Panc1 (cell line): ENCODE measurements at regions of chr3 and their contacts with region 1.

Region 1: DNA sequence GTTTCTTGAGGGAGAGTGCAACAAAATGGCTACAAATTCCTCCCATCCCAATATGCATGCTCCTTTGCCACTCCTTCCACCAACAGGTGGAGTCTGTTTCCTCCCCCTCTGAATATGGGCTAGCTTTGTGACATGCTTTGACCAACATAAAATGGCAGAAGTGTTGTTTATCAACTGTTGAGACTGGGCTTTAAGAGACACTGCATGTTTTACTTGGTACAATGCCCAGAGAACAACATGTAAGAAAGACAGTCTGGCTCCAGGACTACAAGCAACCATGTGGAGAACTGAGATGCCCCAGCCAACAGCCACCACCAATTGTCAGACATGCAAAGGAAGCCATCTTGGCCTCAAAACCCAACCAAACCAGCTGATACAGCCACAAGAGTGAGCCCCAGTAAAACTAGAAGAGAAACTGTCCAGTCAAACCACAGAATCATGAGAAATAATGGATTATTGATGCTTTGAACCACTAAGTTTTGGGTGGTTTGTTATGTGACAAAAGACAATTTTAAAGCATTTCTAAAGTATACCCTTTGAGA is 40.5 kb downstream of the NUDT16 start:
- DNase-seq: no peak
- ATAC-seq: no peak
- H3K4me3 ChIP-seq: no peak overlapping the region
- H3K27ac ChIP-seq: no peak overlapping the region
- H3K4me1 ChIP-seq: no peaks in the 10 kb centered on the region
- H3K27me3 ChIP-seq: peaks cover 4% of the 10 kb centered on the region
- CTCF ChIP-seq: no peak

Region 2: GRCh38 chr3:131107637-131108433 is 314.2 kb before region 1 on chr3:
- CTCF ChIA-PET with region 1: no interaction called
- POLR2A ChIA-PET with region 1: no interaction called
- in situ Hi-C with region 1: no loop called
- intact Hi-C with region 1: no loop called
- DNase-seq: peak; percentile 48
- ATAC-seq: peak; percentile 82
- H3K4me3 ChIP-seq: no peak overlapping the region
- H3K27ac ChIP-seq: peak overlapping the region; percentile 40; the same call in 1 of the 2 replicates
- H3K4me1 ChIP-seq: peaks cover 6% of the 10 kb centered on the region; the same call in 1 of the 2 replicates
- H3K27me3 ChIP-seq: no peaks in the 10 kb centered on the region
- CTCF ChIP-seq: no peak

Region 3: GRCh38 chr3:131458653-131459052 is 36.6 kb after region 1 on chr3:
- CTCF ChIA-PET with region 1: no interaction called
- POLR2A ChIA-PET with region 1: no interaction called
- in situ Hi-C with region 1: no loop called
- intact Hi-C with region 1: no loop called
- DNase-seq: no peak
- ATAC-seq: no peak
- H3K4me3 ChIP-seq: no peak overlapping the region
- H3K27ac ChIP-seq: no peak overlapping the region
- H3K4me1 ChIP-seq: no peaks in the 10 kb centered on the region
- H3K27me3 ChIP-seq: no peaks in the 10 kb centered on the region
- CTCF ChIP-seq: no peak

Region 4: DNA sequence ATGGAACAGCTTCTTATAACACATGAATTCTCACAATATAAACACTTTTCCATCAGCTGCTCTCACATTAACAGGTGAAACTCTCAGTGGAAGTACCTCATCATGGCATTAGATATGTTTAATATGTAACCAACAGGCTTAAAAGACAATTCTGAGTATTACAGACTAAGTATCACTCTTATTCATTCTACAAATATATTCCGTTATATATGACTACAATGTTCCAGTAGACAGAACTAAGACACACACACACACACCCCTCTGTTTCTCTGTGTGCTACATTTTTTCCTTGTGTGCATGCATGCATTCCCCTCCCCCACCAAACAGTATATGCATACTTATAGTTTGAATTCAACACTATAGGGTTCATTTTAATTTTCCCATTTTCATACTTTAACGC is 48.3 kb after region 1 on chr3:
- CTCF ChIA-PET with region 1: no interaction called
- POLR2A ChIA-PET with region 1: interaction called, 15 read pairs
- in situ Hi-C with region 1: no loop called
- intact Hi-C with region 1: no loop called
- DNase-seq: no peak
- ATAC-seq: no peak
- H3K4me3 ChIP-seq: no peak overlapping the region
- H3K27ac ChIP-seq: no peak overlapping the region
- H3K4me1 ChIP-seq: no peaks in the 10 kb centered on the region
- H3K27me3 ChIP-seq: no peaks in the 10 kb centered on the region
- CTCF ChIP-seq: no peak